ENCODE measurements at regions of chr4 and their contacts with region 1.

Region 1: DNA sequence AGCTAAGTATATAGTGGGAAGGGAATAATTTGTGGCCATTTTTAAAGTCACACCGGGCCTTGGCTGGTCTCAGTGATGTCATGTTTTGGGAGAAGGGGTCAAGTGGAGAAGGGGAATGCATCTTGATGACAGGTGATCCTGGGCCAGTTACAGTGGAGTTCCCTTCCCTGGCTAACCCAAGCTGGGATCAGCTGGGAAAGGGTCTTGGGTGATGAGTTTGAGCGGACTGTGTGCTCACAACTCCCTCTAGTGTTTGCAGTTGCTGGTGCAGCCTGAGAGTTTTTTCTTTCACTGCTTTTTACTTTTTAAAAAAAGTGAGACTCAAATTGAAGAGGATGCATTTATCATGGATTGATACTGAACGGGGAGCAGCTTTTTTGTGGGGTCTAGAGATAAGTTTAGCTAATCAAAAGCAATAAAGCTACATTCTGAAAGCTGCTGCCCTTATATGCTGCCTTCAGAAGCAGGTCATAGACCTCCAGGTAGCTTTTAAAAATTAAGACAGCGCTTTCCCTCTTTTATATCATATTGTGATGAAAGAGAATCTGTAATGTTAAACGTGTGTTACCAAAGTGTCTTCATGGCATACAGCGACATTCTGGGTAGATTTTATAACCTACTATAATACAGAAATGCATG is 164.7 kb downstream of the DCLK2 start:
- DNase-seq: no peak
- H3K4me3 ChIP-seq: no peak overlapping the region
- H3K27me3 ChIP-seq: no peaks in the 10 kb centered on the region
- CTCF ChIP-seq: peak; percentile 90

Region 2: DNA sequence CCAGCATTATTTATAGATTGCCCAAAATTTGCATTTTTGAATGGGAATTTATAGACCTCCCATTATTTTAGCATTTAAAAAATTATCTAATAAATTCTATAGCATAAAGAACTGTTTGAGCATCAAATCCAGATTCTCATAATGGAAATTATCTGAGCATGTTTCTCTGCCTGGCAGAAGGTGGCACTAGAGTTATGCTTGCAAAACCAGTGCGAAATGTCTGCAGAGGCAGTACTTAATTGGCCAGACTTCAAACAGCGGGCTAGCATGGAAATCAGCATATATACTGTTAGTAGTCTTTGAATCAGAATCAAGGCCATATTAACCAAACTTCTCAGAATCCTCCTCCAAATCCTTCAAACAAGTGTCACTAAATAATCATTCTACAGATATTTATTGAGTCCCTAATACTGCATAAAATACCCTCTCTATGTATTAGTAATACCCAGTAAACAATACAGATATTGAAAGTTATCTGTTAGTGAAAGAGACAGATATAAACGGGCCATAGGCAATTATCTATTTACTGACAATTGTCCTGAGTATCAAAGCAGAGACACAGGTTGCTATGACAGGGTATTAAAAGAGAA is 243.4 kb before region 1 on chr4:
- CTCF ChIA-PET with region 1: interaction called, 24 read pairs
- POLR2A ChIA-PET with region 1: no interaction called
- DNase-seq: no peak
- H3K4me3 ChIP-seq: no peak overlapping the region
- H3K27me3 ChIP-seq: no peaks in the 10 kb centered on the region
- CTCF ChIP-seq: peak; percentile 87

Region 3: DNA sequence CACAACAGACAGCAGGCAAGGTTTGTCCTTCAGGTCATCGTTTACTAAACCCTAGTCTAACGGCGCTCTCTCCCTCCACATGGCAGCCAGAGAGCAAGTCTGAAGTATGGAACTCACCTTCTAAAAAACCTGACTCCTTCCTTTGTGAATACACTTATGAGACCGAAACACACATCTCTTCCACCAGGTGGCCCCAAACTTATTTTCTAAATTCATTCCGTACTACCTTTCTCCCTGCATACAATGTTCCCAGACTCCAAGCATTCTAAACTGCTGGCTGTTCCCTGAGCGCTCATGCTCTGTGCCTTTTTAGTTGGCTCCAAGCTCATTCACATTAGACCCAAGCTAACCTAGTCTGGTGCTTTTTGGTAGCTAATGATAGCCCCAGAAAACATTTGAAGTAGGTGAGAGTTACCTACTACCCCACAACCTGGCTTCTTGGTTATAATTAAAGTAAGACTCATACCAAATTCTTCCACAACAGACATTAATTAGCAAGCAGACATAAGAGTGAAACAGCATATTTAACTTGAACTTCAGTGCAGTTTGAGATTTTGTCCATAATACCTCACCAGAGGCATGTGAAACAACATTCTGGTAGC is 232.3 kb before region 1 on chr4:
- CTCF ChIA-PET with region 1: interaction called, 18 read pairs
- POLR2A ChIA-PET with region 1: interaction called, 3 read pairs
- DNase-seq: no peak
- H3K4me3 ChIP-seq: no peak overlapping the region
- H3K27me3 ChIP-seq: no peaks in the 10 kb centered on the region
- CTCF ChIP-seq: peak; percentile 58

Region 4: GRCh38 chr4:150078637-150079581 is 164.0 kb before region 1 on chr4:
- CTCF ChIA-PET with region 1: interaction called, 18 read pairs
- POLR2A ChIA-PET with region 1: no interaction called
- DNase-seq: no peak
- H3K4me3 ChIP-seq: peak overlapping the region; percentile 97
- H3K27me3 ChIP-seq: no peaks in the 10 kb centered on the region
- CTCF ChIP-seq: no peak; the same call in 1 of the 2 replicates

Region 5: DNA sequence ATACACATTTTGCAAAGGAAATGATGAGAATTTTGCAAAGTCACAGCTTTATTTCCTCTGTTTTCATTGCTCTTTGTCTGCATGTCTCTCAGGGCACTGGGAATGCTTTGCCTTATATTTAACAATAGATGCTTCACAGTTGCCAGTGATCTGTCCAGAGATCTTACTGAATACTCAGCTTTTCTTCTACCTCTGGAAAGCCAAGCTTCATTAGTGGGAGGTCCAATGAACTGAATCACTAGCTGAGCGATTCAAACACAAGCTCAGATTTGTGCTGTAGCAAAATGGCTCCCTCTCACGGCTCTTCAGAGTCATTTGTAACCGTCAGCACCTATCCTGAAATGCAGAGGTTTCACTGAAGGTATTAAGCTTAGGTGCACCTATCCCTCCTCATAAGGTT is 25.7 kb before region 1 on chr4:
- CTCF ChIA-PET with region 1: interaction called, 14 read pairs
- POLR2A ChIA-PET with region 1: no interaction called
- DNase-seq: no peak
- H3K4me3 ChIP-seq: no peak overlapping the region
- H3K27me3 ChIP-seq: no peaks in the 10 kb centered on the region
- CTCF ChIP-seq: peak; percentile 42

Region 6: DNA sequence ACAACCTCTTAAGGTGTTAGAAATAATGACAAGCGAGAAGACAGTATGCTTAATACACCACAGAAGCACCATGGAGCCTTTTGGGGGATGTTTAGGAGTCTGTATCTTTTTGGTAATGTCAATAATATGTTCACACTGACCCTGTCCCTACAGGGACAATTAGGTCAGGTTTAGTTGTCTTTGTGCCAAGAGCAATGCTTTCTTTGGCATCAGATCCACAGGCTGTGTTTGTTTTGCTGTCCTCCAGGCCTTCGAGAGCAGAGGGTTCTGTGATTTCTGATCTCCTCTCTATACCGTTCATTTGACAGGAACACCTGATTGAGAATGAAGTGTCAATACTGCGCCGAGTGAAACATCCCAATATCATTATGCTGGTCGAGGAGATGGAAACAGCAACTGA is 10.9 kb before region 1 on chr4:
- CTCF ChIA-PET with region 1: interaction called, 12 read pairs
- POLR2A ChIA-PET with region 1: no interaction called
- DNase-seq: no peak
- H3K4me3 ChIP-seq: no peak overlapping the region
- H3K27me3 ChIP-seq: no peaks in the 10 kb centered on the region
- CTCF ChIP-seq: no peak

Region 7: DNA sequence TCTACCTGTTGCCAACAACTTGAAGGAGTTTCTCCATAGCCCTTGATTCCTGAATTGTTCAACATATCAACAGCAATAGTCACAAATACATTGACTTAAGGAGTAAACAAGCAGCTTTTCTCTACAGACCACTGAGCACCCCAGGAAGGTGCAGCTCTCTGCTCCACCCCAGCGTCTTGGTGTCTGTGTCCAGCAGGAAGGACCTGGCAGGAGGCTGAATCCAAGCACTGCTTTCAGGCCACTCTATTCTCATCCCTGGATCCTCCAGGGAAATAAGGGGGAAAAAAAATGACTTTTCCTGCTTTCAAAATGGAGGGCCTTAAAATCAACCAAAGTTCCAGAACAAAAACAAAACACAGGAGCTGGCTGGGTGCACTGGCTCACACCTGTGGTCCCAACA is 178.7 kb after region 1 on chr4:
- CTCF ChIA-PET with region 1: no interaction called
- POLR2A ChIA-PET with region 1: no interaction called
- DNase-seq: no peak
- H3K4me3 ChIP-seq: no peak overlapping the region
- H3K27me3 ChIP-seq: no peaks in the 10 kb centered on the region
- CTCF ChIP-seq: no peak

Region 8: GRCh38 chr4:150867148-150867547 is 624.2 kb after region 1 on chr4:
- CTCF ChIA-PET with region 1: interaction called, 10 read pairs
- POLR2A ChIA-PET with region 1: no interaction called
- DNase-seq: peak; percentile 23
- H3K4me3 ChIP-seq: no peak overlapping the region
- H3K27me3 ChIP-seq: no peaks in the 10 kb centered on the region
- CTCF ChIP-seq: peak; percentile 45